CD8-positive, alpha-beta T cell (primary cell): ENCODE measurements at regions of chr18 and their contacts with region 1.

Region 1: GRCh38 chr18:79393635-79394533 is 1.8 kb upstream of the NFATC1 start:
- DNase-seq: peak in 5 of 9 experiments; percentile 40 to 69 (median 59)
- ATAC-seq: peak; percentile 15
- H3K4me3 ChIP-seq: peak overlapping the region; percentile 45 to 59
- H3K4me3 Mint-ChIP-seq: peak overlapping the region; percentile 80
- H3K27ac ChIP-seq: peak overlapping the region in 1 of 2 experiments; percentile 24
- H3K27ac Mint-ChIP-seq: peak overlapping the region; percentile 46
- H3K4me1 ChIP-seq: peaks cover 25% of the 10 kb centered on the region
- H3K4me1 Mint-ChIP-seq: peaks cover 33% of the 10 kb centered on the region
- H3K27me3 ChIP-seq: peaks cover 0 to 14% of the 10 kb centered on the region in 2 experiments
- H3K27me3 Mint-ChIP-seq: peaks cover 4% of the 10 kb centered on the region
- CTCF ChIP-seq: no peak

Region 2: DNA sequence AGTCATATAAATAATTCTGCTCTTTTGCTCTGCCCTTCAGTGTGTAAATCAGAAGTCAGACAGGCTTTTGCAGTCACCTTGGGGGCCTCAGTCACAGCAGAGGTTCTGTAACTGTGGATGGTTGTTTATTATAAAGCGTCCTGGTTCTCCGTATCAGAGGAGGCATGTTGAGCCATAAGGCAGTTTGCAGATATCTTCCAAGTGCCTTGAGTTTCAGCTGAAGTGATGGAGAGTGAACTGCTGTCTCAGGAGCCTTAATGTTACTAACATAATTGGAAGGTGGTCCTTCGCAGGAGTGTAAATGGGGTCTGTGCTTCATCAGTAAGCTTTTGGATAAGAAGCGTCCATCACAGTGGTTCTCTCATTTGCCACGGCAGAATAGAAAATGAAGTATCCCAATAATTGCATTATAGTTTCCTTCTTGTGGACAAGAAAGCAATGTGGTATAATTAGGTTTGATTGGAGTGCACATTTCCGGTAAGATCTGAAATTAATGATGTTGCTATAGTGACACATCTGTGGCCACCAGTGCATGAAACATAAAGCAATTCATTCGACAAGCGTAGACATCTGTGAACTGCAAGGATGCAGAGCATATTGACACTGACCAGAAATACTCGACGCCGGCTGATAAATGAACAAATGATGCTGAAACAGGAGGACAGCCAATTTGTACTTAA is 110.6 kb before region 1 on chr18:
- CTCF ChIA-PET with region 1: no interaction called
- POLR2A ChIA-PET with region 1: no interaction called
- intact Hi-C with region 1: no loop called
- DNase-seq: no peak
- ATAC-seq: no peak
- H3K4me3 ChIP-seq: no peak overlapping the region
- H3K4me3 Mint-ChIP-seq: no peak overlapping the region
- H3K27ac ChIP-seq: no peak overlapping the region
- H3K27ac Mint-ChIP-seq: no peak overlapping the region
- H3K4me1 ChIP-seq: no peaks in the 10 kb centered on the region
- H3K4me1 Mint-ChIP-seq: no peaks in the 10 kb centered on the region
- H3K27me3 ChIP-seq: no peaks in the 10 kb centered on the region
- H3K27me3 Mint-ChIP-seq: no peaks in the 10 kb centered on the region
- CTCF ChIP-seq: no peak

Region 3: DNA sequence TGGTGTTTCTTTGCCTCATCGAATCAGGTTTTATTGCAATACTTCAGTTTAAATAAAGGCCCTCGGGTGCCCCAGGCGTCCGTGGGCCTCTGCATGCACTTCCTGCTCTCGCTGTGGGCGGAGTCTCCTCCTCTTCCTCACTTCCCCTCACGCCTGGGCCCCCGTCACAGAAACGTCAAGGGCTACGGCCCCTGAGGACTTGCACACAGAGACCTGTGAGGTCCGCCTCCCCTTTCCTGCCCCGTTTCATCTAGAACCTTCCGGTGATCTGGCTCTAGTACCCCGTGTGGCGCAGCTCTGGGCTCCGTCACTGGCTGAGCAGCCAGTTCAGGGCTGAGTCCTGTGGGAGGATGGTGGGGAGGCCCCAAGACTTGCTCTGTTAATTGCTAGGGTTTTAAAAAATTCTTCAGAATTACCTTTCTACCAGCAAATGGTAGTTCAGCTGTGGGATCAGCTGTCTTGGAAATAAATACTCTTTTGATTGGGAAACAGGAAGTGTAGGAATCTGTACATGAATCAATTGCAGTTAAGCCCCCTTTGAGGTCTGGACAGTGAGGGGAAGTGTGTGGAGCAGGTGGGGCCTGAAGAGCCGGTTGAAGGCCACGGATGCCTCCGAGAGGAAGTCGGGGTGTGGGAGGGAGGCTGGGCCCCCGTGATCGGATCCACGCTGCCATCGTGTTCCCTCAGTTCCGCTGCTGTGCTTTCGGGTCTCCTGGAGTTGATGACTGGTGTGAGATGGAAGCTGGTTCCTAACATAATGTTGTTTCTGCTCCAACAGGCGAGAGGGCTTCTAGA is 12.1 kb after region 1 on chr18:
- CTCF ChIA-PET with region 1: interaction called, 3 read pairs
- POLR2A ChIA-PET with region 1: interaction called, 11 read pairs
- intact Hi-C with region 1: no loop called
- DNase-seq: peak; percentile 78 to 96 (median 87)
- ATAC-seq: peak; percentile 85
- H3K4me3 ChIP-seq: peak overlapping the region; percentile 34 to 38
- H3K4me3 Mint-ChIP-seq: peak overlapping the region; percentile 72
- H3K27ac ChIP-seq: peak overlapping the region; percentile 86 to 94
- H3K27ac Mint-ChIP-seq: peak overlapping the region; percentile 94
- H3K4me1 ChIP-seq: peaks cover 59% of the 10 kb centered on the region
- H3K4me1 Mint-ChIP-seq: peaks cover 55% of the 10 kb centered on the region
- H3K27me3 ChIP-seq: no peaks in the 10 kb centered on the region
- H3K27me3 Mint-ChIP-seq: no peaks in the 10 kb centered on the region
- CTCF ChIP-seq: no peak

Region 4: GRCh38 chr18:79439201-79440023 is 45.5 kb after region 1 on chr18:
- CTCF ChIA-PET with region 1: no interaction called
- POLR2A ChIA-PET with region 1: no interaction called
- intact Hi-C with region 1: loop called in 1 of 2 experiments (anchors 10 kb)
- DNase-seq: peak in 4 of 9 experiments; percentile 38 to 48 (median 42)
- ATAC-seq: no peak
- H3K4me3 ChIP-seq: no peak overlapping the region
- H3K4me3 Mint-ChIP-seq: no peak overlapping the region
- H3K27ac ChIP-seq: no peak overlapping the region
- H3K27ac Mint-ChIP-seq: peak overlapping the region; percentile 37
- H3K4me1 ChIP-seq: peaks cover 16% of the 10 kb centered on the region
- H3K4me1 Mint-ChIP-seq: peaks cover 43% of the 10 kb centered on the region
- H3K27me3 ChIP-seq: no peaks in the 10 kb centered on the region
- H3K27me3 Mint-ChIP-seq: no peaks in the 10 kb centered on the region
- CTCF ChIP-seq: no peak